ENCODE measurements at regions of chr1 and their contacts with region 1.

Region 1: DNA sequence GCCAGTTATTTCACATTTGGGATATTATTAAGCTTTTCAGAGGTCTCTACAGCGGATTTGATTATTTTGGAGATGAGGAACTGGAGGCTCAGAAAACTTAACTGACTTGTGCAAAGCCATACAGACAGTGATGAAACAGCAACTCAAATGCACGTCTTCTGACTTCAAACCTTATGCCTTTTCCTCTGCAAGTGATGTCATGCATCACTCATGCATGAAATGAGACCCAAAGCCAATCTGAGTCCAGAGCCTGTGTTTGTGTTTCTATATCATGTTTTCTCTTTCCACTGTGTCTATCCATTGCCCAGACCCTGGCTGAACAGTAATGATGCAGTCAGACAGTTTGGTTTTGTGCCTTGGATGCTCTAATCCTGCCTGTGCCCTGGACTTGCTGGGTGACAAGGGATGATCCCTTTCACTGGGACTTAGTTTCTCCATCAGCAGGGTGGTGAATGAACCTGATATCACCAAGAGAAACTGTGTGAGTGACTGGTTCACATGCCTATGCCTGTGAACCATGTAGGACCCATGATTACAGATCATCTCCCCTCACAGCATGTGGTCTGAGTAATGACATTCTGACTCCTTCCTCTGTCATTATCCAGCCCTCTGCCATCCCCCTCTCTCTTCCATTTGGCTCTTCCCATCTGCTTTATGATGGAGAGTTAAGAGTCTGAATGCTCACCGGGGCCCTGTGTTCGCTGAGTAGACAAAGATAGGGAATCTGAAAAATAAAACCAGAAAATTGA is 33.4 kb downstream of the SLAMF6 start:
- DNase-seq: peak; percentile 52
- H3K4me3 ChIP-seq: peak overlapping the region; percentile 22
- H3K27ac ChIP-seq: peak overlapping the region; percentile 97
- H3K4me1 ChIP-seq: peaks cover 75% of the 10 kb centered on the region
- CTCF ChIP-seq: no peak

Region 2: GRCh38 chr1:160474392-160475242 is 15.1 kb before region 1 on chr1:
- CTCF ChIA-PET with region 1: interaction called, 5 read pairs
- POLR2A ChIA-PET with region 1: interaction called, 30 read pairs
- intact Hi-C with region 1: loop called (anchors 2 kb)
- DNase-seq: peak; percentile 66
- H3K4me3 ChIP-seq: peak overlapping the region; percentile 17
- H3K27ac ChIP-seq: peak overlapping the region; percentile 68
- H3K4me1 ChIP-seq: peaks cover 37% of the 10 kb centered on the region
- CTCF ChIP-seq: no peak

Measured in OCI-LY7 (cell line).